ENCODE measurements at regions of chr9 and their contacts with region 1.

Region 1: GRCh38 chr9:93962561-93963440 is 7.6 kb upstream of the BARX1 start:
- DNase-seq: peak; percentile 70
- ATAC-seq: peak; percentile 90
- H3K4me3 ChIP-seq: no peak overlapping the region
- H3K27ac ChIP-seq: no peak overlapping the region
- H3K4me1 ChIP-seq: peaks cover 0 to 6% of the 10 kb centered on the region in 2 experiments; a peak in 1 of 4 replicates
- H3K27me3 ChIP-seq: no peaks in the 10 kb centered on the region
- CTCF ChIP-seq: peak; percentile 68 to 90 (median 89)
- POLR2A ChIP-seq: no peak
- RAD21 ChIP-seq: peak; percentile 85

Region 2: DNA sequence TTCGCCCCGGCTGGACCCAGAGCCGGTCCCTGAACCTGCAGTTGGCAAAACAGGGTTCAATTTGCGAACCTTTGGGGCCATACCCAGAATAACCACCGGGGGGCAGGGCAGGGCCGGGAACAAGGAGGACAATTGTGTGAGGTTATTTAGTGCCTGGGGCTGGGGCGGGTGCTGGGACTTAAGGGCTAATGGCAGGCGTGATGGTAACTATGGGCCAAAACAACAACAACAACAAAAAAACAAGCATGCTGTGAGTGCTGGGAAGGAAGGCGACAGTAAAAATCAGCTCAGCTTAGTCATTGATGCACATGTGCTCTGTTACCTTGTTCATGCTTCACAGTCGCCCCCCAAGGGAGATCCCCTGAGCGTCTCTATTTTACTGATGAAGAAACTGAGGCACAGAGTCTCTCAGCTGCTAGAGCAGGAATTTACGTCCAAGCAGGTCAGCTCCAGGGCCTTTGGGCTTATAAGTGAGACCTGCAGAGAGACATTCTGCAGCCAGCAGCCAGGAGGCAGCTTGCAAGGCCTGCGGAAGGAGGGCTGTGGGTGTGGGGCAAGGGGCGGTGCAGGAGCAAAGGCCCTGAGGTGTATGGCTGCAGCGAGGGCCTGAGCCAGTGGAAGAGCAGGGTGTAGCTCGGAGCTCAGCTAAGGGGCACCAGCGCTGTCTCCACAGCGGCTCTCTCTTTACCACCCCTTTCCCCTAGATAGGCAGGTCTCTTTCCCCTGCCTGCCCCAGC is 280.4 kb before region 1 on chr9:
- CTCF ChIA-PET with region 1: interaction called, 18 read pairs
- POLR2A ChIA-PET with region 1: no interaction called
- RAD21 ChIA-PET with region 1: no interaction called
- intact Hi-C with region 1: loop called (anchors 1 kb)
- DNase-seq: peak; percentile 34
- ATAC-seq: peak; percentile 86
- H3K4me3 ChIP-seq: no peak overlapping the region
- H3K27ac ChIP-seq: no peak overlapping the region
- H3K4me1 ChIP-seq: peaks cover 3 to 5% of the 10 kb centered on the region in 2 experiments; a peak in 1 of 4 replicates
- H3K27me3 ChIP-seq: no peaks in the 10 kb centered on the region
- CTCF ChIP-seq: peak; percentile 80 to 88 (median 88)
- POLR2A ChIP-seq: no peak
- RAD21 ChIP-seq: peak; percentile 92

Measured in HCT116 (cell line).